Activated CD4-positive, alpha-beta T cell treated with anti-CD3 and anti-CD28 coated beads for 36 hours (primary cell): ENCODE measurements at regions of chr19 and their contacts with region 1.

Region 1: GRCh38 chr19:1863726-1864480 is 524 bp upstream of the KLF16 start:
- DNase-seq: peak; percentile 97
- ATAC-seq: peak; percentile 75
- H3K4me3 Mint-ChIP-seq: peak overlapping the region; percentile 68
- H3K27ac Mint-ChIP-seq: peak overlapping the region; percentile 72
- H3K4me1 Mint-ChIP-seq: peaks cover 37% of the 10 kb centered on the region
- H3K27me3 Mint-ChIP-seq: no peaks in the 10 kb centered on the region

Region 2: GRCh38 chr19:1269065-1269477 is 594.8 kb before region 1 on chr19 and contains the start of gene CIRBP:
- CTCF ChIA-PET with region 1: no interaction called
- POLR2A ChIA-PET with region 1: no interaction called
- intact Hi-C with region 1: loop called in 1 of 2 experiments (anchors 5 kb)
- DNase-seq: peak; percentile 100
- ATAC-seq: peak; percentile 87
- H3K4me3 Mint-ChIP-seq: peak within 1 kb of the TSS; percentile 84
- H3K27ac Mint-ChIP-seq: peak within 1 kb of the TSS; percentile 87
- H3K4me1 Mint-ChIP-seq: peaks cover 66% of the 10 kb centered on the region
- H3K27me3 Mint-ChIP-seq: no peaks in the 10 kb centered on the region
- total RNA-seq, gene CIRBP: 123 to 188 TPM

Region 3: DNA sequence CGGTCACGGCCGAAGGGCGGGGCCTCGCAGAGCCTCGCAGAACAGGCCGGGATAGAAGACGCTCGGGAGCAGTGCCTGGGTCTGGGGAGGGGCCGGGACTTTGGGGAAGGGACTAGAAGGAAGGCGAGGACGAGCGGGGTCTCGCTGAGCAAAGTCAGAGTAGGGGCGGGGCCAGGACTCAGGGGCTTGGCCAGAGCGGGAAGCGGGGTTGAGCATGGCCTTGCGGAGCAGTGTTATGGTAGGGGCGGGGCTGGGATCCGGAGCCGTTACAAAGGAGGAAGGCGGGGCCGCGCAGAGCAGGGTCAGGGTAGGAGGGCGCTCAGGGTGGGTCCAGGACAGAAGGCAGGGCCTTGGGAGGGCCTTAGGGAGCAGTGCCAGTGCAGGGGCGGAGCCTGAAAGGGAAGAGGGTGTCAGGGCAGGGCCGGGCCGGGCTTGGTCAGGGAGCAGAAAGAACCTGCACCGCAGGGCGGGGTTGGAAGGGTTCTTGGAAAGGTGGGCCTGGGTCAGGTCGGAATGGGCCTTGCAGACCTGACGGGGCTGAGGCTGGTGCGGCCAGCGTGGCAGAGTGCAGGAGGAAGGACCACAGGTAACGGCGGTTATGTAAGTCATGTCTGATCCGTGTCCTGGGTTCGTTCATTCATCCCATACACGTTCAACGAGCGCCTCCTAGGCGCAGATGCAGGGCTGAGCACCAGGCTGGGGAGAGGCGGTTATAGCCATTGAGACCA is 51.3 kb before region 1 on chr19:
- CTCF ChIA-PET with region 1: no interaction called
- POLR2A ChIA-PET with region 1: no interaction called
- intact Hi-C with region 1: loop called in 1 of 2 experiments (anchors 1 kb)
- DNase-seq: peak; percentile 94
- ATAC-seq: peak; percentile 90
- H3K4me3 Mint-ChIP-seq: peak overlapping the region; percentile 77
- H3K27ac Mint-ChIP-seq: peak overlapping the region; percentile 90
- H3K4me1 Mint-ChIP-seq: peaks cover 14% of the 10 kb centered on the region
- H3K27me3 Mint-ChIP-seq: no peaks in the 10 kb centered on the region

Region 4: DNA sequence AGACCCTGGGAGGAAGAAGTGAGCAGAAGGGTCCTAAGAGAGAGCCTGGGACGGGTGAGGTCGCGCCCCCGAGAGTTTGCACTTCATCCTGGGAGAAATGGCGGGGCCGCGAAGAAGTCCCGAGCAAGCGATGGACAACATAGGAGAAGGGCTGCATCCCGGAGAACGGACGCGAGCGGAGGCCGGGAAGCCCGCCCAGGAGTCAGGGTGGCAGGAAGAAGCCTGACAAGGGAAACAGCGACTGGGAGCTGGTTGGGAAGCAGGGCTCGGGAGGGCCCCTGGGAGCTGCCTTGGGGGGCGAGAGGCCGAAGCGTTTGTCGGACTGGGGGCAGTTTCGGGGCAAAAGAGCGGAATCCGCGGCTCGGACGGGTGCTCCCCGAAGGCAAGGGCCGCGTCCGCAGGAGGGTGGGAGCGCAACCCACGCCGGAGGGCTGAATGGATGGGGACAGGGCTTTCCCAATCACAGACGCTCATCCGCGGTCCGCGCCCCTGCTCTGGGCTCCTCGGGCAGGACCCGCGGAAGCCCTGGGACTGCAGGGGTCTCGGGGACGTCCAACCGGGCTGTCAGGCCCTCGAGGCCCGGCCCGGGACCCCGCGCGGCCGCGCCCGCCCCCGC is 20.9 kb after region 1 on chr19:
- CTCF ChIA-PET with region 1: interaction called, 3 read pairs
- POLR2A ChIA-PET with region 1: no interaction called
- intact Hi-C with region 1: loop called in 1 of 2 experiments (anchors 1 kb)
- DNase-seq: peak; percentile 32
- ATAC-seq: peak; percentile 1
- H3K4me3 Mint-ChIP-seq: peak overlapping the region; percentile 97
- H3K27ac Mint-ChIP-seq: peak overlapping the region; percentile 98
- H3K4me1 Mint-ChIP-seq: peaks cover 31% of the 10 kb centered on the region
- H3K27me3 Mint-ChIP-seq: no peaks in the 10 kb centered on the region

Region 5: GRCh38 chr19:2061495-2062381 is 197.8 kb after region 1 on chr19:
- CTCF ChIA-PET with region 1: no interaction called
- POLR2A ChIA-PET with region 1: no interaction called
- intact Hi-C with region 1: loop called in 1 of 2 experiments (anchors 5 kb)
- DNase-seq: peak; percentile 100
- ATAC-seq: peak; percentile 91
- H3K4me3 Mint-ChIP-seq: peak overlapping the region; percentile 88
- H3K27ac Mint-ChIP-seq: peak overlapping the region; percentile 92
- H3K4me1 Mint-ChIP-seq: peaks cover 37% of the 10 kb centered on the region
- H3K27me3 Mint-ChIP-seq: no peaks in the 10 kb centered on the region

Region 6: DNA sequence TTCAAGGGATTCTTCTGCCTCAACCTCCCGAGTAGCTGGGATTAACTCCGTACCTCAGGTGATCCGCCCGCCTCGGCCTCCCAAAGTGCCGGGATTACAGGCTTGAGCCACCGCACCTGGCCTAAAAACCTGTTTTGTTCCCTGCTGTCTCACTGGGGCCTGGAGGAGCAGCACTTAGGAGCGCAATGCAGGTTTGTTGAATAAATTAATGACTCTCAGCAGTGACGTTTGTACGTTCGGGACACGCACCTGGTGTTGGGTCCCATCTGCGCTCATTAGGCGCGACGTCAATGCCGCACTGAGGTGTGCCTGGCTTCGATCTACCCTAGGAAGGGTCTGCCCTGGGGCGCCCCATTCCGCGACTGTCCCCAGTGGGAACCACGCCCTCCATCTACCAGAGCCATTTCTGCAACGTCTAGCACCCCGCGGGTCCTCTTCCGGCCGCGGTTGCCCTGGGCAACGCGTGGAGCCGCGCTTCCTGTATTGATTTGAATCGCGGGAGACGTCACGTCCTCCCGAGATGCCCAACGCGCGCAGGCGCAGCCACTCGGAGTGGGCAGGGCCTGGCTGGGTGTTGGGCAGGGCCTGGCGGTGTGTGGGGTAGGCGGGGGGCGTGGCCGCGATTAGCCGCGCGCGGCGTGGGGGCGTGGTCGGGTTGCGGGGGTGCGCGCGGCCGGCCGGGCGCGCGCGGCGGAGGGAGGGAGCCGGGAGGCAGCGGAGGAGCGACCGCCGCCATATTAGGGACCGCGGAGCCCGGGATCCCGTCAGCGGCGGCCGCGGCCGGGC is 1641.9 kb after region 1 on chr19 and contains the start of gene FZR1:
- CTCF ChIA-PET with region 1: no interaction called
- POLR2A ChIA-PET with region 1: no interaction called
- intact Hi-C with region 1: loop called in 1 of 2 experiments (anchors 1 kb)
- DNase-seq: peak; percentile 100
- ATAC-seq: peak; percentile 92
- H3K4me3 Mint-ChIP-seq: peak within 1 kb of the TSS; percentile 84
- H3K27ac Mint-ChIP-seq: peak within 1 kb of the TSS; percentile 86
- H3K4me1 Mint-ChIP-seq: peaks cover 45% of the 10 kb centered on the region
- H3K27me3 Mint-ChIP-seq: no peaks in the 10 kb centered on the region
- total RNA-seq, gene FZR1: 40.8 to 50.7 TPM